Head of caudate nucleus (tissue), 42 donors: ENCODE measurements at regions of chr4 and their contacts with region 1.

Region 1: GRCh38 chr4:1752284-1753041 is 31.1 kb downstream of the TACC3 start:
- DNase-seq: no peak

Region 2: GRCh38 chr4:1381944-1382541 is 370.4 kb before region 1 on chr4:
- intact Hi-C with region 1: no loop called
- DNase-seq: peak in 1 of 42 donors; percentile 2

Region 3: DNA sequence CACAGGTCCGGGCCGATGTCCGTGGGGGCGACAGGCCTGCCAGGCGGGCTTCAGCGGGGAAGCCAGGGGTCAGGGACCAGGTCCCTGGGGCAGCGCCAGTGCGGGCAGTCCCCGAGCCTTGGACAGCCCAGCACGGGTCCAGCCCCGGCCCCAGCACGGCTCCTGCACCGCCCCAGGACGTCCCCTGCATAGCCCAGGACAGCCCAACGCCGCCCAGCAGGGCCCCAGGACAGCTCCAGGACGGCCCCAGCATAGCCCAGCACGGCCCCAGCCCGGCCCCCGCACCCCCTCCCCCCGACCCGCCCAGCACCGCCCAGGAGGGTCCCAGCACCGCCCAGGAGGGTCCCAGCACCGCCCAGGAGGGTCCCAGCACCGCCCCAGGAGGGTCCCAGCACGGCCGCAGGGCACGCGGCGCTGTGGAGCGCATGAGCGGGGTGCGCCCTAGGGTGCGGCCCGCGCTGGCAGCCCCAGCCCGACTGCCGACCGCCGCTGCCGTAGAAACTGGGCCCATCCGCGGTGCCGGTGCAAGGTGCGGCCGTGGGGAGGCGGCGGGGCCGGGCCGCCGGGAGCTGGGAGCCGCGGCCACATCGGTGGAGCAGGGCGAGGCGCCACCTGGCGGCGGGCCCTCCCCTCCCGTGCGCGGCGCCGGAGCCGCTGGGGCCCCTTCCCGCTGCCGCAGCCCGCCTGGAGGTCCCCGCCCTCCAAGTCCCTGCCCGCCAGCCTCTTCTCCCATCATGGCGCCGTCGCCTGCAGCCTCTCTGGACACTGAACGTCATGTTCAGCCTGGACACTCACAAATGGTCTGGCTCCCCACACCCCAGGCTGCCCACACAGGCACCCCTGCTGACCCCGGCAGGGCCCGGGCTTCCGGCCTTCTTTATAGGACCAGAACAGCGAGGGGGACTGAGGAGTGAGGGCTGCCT is 239.5 kb before region 1 on chr4:
- intact Hi-C with region 1: no loop called
- DNase-seq: peak in 28 of 42 donors; percentile 15 to 69 (median 34)

Region 4: DNA sequence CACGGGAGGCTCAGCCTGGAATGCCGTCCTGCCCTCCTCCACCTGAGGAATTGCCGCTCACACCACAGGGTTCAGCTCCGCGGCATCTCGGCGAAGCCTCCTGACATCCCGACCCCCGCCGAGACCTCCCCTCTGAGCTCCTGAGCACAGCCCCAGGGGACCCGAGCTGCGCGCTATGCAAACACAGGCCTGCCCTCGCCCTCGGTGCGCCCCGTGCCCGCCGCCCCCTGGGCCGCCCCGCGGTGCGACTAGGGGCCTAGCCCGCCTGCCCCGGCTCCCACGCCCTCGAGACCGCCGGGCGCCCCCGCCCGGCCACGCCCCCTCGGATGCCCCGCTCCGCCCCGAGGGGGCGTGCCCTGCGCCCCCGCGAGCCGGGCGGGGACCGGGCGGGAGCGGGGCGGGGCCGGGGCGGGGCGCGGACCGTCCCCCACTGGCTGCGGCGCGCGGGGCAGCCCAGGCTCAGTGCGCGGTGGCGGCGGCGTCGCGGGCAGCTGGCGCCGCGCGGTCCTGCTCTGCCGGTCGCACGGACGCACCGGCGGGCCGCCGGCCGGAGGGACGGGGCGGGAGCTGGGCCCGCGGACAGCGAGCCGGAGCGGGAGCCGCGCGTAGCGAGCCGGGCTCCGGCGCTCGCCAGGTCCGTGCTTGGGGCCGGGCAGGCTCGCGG is 40.5 kb after region 1 on chr4 and contains the start of gene FGFR3:
- intact Hi-C with region 1: no loop called
- DNase-seq: peak in 10 of 42 donors; percentile 23 to 60 (median 47)

Region 5: GRCh38 chr4:1899149-1900086 is 147.0 kb after region 1 on chr4:
- intact Hi-C with region 1: loop called (anchors 5 kb)
- DNase-seq: peak; percentile 49 to 92 (median 78)